ENCODE measurements at regions of chr10 and their contacts with region 1.

Region 1: GRCh38 chr10:95841661-95842498 is 65.9 kb upstream of the CC2D2B start:
- DNase-seq: peak; percentile 50
- H3K4me3 ChIP-seq: no peak overlapping the region
- H3K27ac ChIP-seq: no peak overlapping the region
- H3K4me1 ChIP-seq: no peaks in the 10 kb centered on the region
- H3K27me3 ChIP-seq: no peaks in the 10 kb centered on the region
- CTCF ChIP-seq: peak in 3 of 4 experiments; percentile 64 to 75 (median 71)
- POLR2A ChIP-seq: no peak

Region 2: DNA sequence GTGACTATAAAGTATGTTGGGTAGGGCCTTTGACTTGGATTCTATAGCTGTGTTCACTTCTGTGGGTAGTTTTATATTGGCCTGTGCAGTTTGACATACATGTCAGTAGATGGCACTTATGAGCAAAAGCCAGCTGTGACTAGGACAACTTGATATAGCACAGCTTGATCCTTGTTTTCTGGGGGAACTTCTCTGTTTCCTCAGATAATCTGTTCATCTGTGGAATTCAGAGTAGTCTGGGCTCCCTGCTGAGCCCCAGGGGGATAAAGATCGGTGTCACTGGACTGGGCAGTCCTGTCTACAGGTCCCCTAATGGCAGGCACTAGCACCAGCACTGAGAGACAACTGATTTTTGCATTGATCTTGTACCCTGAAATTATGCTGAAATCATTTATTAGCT is 878.0 kb before region 1 on chr10:
- intact Hi-C with region 1: no loop called
- DNase-seq: no peak
- H3K4me3 ChIP-seq: no peak overlapping the region
- H3K27ac ChIP-seq: no peak overlapping the region
- H3K4me1 ChIP-seq: no peaks in the 10 kb centered on the region
- H3K27me3 ChIP-seq: no peaks in the 10 kb centered on the region
- CTCF ChIP-seq: peak in 1 of 4 experiments; percentile 14
- POLR2A ChIP-seq: no peak

Region 3: GRCh38 chr10:95693668-95694534 is 148.0 kb before region 1 on chr10 and contains the start of gene TCTN3:
- intact Hi-C with region 1: loop called (anchors 2 kb)
- DNase-seq: peak; percentile 98
- H3K4me3 ChIP-seq: peak within 1 kb of the TSS; percentile 71 to 89
- H3K27ac ChIP-seq: peak within 1 kb of the TSS; percentile 63 to 80
- H3K4me1 ChIP-seq: peaks cover 5% of the 10 kb centered on the region
- H3K27me3 ChIP-seq: no peaks in the 10 kb centered on the region
- CTCF ChIP-seq: peak; percentile 99 to 100 (median 100)
- POLR2A ChIP-seq: peak; percentile 67
- total RNA-seq, gene TCTN3: 27.7 to 44.9 TPM

Region 4: GRCh38 chr10:95755511-95756004 is 86.3 kb before region 1 on chr10:
- intact Hi-C with region 1: loop called (anchors 5 kb)
- DNase-seq: no peak
- H3K4me3 ChIP-seq: peak overlapping the region in 1 of 2 donors; percentile 7
- H3K27ac ChIP-seq: peak overlapping the region in 1 of 2 donors; percentile 51
- H3K4me1 ChIP-seq: peaks cover 3% of the 10 kb centered on the region
- H3K27me3 ChIP-seq: no peaks in the 10 kb centered on the region
- CTCF ChIP-seq: no peak
- POLR2A ChIP-seq: no peak

Region 5: GRCh38 chr10:95964756-95965155 is 122.9 kb after region 1 on chr10:
- intact Hi-C with region 1: no loop called
- DNase-seq: no peak
- H3K4me3 ChIP-seq: no peak overlapping the region
- H3K27ac ChIP-seq: no peak overlapping the region
- H3K4me1 ChIP-seq: no peaks in the 10 kb centered on the region
- H3K27me3 ChIP-seq: no peaks in the 10 kb centered on the region
- CTCF ChIP-seq: no peak
- POLR2A ChIP-seq: no peak

Measured in prostate gland (tissue), 2 donors.